CD8-positive, alpha-beta memory T cell (primary cell): ENCODE measurements at regions of chr12 and their contacts with region 1.

Region 1: GRCh38 chr12:52023182-52023975 is 16.6 kb downstream of the TAMALIN start:
- DNase-seq: peak; percentile 84 to 93 (median 88)
- H3K4me3 ChIP-seq: peak overlapping the region; percentile 61
- H3K4me3 Mint-ChIP-seq: peak overlapping the region; percentile 75 to 90 (median 86)
- H3K27ac ChIP-seq: no peak overlapping the region
- H3K27ac Mint-ChIP-seq: peak overlapping the region; percentile 75 to 97 (median 88)
- H3K4me1 ChIP-seq: peaks cover 33% of the 10 kb centered on the region
- H3K4me1 Mint-ChIP-seq: peaks cover 31 to 43% (median 41%) of the 10 kb centered on the region in 3 donors
- H3K27me3 ChIP-seq: no peaks in the 10 kb centered on the region
- H3K27me3 Mint-ChIP-seq: no peaks in the 10 kb centered on the region

Region 2: GRCh38 chr12:51860986-51861385 is 162.4 kb before region 1 on chr12:
- CTCF ChIA-PET with region 1: no interaction called
- POLR2A ChIA-PET with region 1: no interaction called
- DNase-seq: no peak
- H3K4me3 ChIP-seq: no peak overlapping the region
- H3K4me3 Mint-ChIP-seq: no peak overlapping the region
- H3K27ac ChIP-seq: no peak overlapping the region
- H3K27ac Mint-ChIP-seq: no peak overlapping the region
- H3K4me1 ChIP-seq: peaks cover 8% of the 10 kb centered on the region
- H3K4me1 Mint-ChIP-seq: peaks cover 2 to 15% (median 11%) of the 10 kb centered on the region in 3 donors
- H3K27me3 ChIP-seq: peaks cover 26% of the 10 kb centered on the region
- H3K27me3 Mint-ChIP-seq: peaks cover 41 to 64% of the 10 kb centered on the region in 2 donors

Region 3: DNA sequence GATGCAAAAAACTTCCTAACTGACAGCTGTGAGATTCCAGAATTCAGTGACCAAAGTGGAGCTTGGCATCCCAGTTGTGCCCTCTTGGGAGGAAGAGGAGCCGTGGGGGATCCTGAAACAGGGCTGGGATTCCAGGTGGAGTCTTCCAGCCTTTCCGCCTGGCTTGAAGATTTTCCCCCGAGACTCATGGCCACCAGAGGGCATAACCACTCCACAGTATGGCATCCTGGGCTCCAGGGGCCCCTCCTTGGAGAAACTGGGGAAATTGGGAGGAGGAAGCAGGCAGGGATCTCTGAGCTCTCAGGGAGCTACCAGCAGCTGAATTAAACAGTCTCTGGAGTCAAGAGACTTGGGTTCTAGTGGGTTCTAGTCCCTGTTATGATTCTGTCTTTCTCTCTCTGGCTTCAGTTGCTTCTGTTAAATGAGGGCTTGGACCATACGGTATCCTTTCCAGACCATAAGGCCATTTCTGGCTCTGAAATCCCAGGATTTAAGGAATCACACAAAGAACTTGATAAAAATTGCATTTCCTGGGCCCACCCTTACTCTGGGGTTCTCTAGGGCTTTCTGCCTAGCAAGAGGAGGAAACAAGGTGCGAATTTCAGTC is 19.2 kb before region 1 on chr12:
- CTCF ChIA-PET with region 1: interaction called, 488 read pairs
- POLR2A ChIA-PET with region 1: interaction called, 10 read pairs
- DNase-seq: no peak
- H3K4me3 ChIP-seq: no peak overlapping the region
- H3K4me3 Mint-ChIP-seq: peak overlapping the region in 2 of 7 donors; percentile 65 to 88
- H3K27ac ChIP-seq: no peak overlapping the region
- H3K27ac Mint-ChIP-seq: peak overlapping the region in 2 of 8 donors; percentile 3 to 47
- H3K4me1 ChIP-seq: peaks cover 19% of the 10 kb centered on the region
- H3K4me1 Mint-ChIP-seq: peaks cover 13 to 24% (median 15%) of the 10 kb centered on the region in 3 donors
- H3K27me3 ChIP-seq: no peaks in the 10 kb centered on the region
- H3K27me3 Mint-ChIP-seq: peaks cover 6 to 11% of the 10 kb centered on the region in 2 donors

Region 4: GRCh38 chr12:52050761-52051541 is 27.6 kb after region 1 on chr12 and contains the start of gene NR4A1:
- CTCF ChIA-PET with region 1: interaction called, 206 read pairs
- POLR2A ChIA-PET with region 1: interaction called, 5 read pairs
- DNase-seq: peak; percentile 99 to 100 (median 99)
- H3K4me3 ChIP-seq: peak within 1 kb of the TSS; percentile 91
- H3K4me3 Mint-ChIP-seq: peak within 1 kb of the TSS; percentile 79 to 99 (median 94)
- H3K27ac ChIP-seq: peak within 1 kb of the TSS; percentile 90
- H3K27ac Mint-ChIP-seq: peak within 1 kb of the TSS; percentile 85 to 100 (median 98)
- H3K4me1 ChIP-seq: peaks cover 27% of the 10 kb centered on the region
- H3K4me1 Mint-ChIP-seq: peaks cover 24 to 39% (median 28%) of the 10 kb centered on the region in 3 donors
- H3K27me3 ChIP-seq: no peaks in the 10 kb centered on the region
- H3K27me3 Mint-ChIP-seq: peaks cover 0 to 2% of the 10 kb centered on the region in 2 donors
- total RNA-seq, gene NR4A1: 20.4 to 23.4 TPM

Region 5: GRCh38 chr12:52069327-52070184 is 46.2 kb after region 1 on chr12 and contains the start of gene ATG101:
- CTCF ChIA-PET with region 1: interaction called, 580 read pairs
- POLR2A ChIA-PET with region 1: interaction called, 20 read pairs
- DNase-seq: peak; percentile 75 to 92 (median 90)
- H3K4me3 ChIP-seq: peak within 1 kb of the TSS; percentile 95
- H3K4me3 Mint-ChIP-seq: peak within 1 kb of the TSS; percentile 94 to 99 (median 98)
- H3K27ac ChIP-seq: peak within 1 kb of the TSS; percentile 90
- H3K27ac Mint-ChIP-seq: peak within 1 kb of the TSS; percentile 96 to 100 (median 99)
- H3K4me1 ChIP-seq: peaks cover 36% of the 10 kb centered on the region
- H3K4me1 Mint-ChIP-seq: peaks cover 40 to 51% (median 48%) of the 10 kb centered on the region in 3 donors
- H3K27me3 ChIP-seq: no peaks in the 10 kb centered on the region
- H3K27me3 Mint-ChIP-seq: peaks cover 3 to 14% of the 10 kb centered on the region in 2 donors
- total RNA-seq, gene ATG101: 49.7 to 56.2 TPM

Region 6: GRCh38 chr12:52121824-52122539 is 98.6 kb after region 1 on chr12:
- CTCF ChIA-PET with region 1: interaction called, 26 read pairs
- POLR2A ChIA-PET with region 1: no interaction called
- DNase-seq: peak; percentile 18 to 68 (median 38)
- H3K4me3 ChIP-seq: no peak overlapping the region
- H3K4me3 Mint-ChIP-seq: peak overlapping the region in 1 of 7 donors; percentile 4
- H3K27ac ChIP-seq: no peak overlapping the region
- H3K27ac Mint-ChIP-seq: peak overlapping the region in 1 of 8 donors; percentile 11
- H3K4me1 ChIP-seq: no peaks in the 10 kb centered on the region
- H3K4me1 Mint-ChIP-seq: peaks cover 2 to 13% (median 4%) of the 10 kb centered on the region in 3 donors
- H3K27me3 ChIP-seq: no peaks in the 10 kb centered on the region
- H3K27me3 Mint-ChIP-seq: peaks cover 13 to 56% of the 10 kb centered on the region in 2 donors